Activated naive CD4-positive, alpha-beta T cell treated with anti-CD3 and anti-CD28 coated beads for 36 hours (primary cell): ENCODE measurements at regions of chr12 and their contacts with region 1.

Region 1: DNA sequence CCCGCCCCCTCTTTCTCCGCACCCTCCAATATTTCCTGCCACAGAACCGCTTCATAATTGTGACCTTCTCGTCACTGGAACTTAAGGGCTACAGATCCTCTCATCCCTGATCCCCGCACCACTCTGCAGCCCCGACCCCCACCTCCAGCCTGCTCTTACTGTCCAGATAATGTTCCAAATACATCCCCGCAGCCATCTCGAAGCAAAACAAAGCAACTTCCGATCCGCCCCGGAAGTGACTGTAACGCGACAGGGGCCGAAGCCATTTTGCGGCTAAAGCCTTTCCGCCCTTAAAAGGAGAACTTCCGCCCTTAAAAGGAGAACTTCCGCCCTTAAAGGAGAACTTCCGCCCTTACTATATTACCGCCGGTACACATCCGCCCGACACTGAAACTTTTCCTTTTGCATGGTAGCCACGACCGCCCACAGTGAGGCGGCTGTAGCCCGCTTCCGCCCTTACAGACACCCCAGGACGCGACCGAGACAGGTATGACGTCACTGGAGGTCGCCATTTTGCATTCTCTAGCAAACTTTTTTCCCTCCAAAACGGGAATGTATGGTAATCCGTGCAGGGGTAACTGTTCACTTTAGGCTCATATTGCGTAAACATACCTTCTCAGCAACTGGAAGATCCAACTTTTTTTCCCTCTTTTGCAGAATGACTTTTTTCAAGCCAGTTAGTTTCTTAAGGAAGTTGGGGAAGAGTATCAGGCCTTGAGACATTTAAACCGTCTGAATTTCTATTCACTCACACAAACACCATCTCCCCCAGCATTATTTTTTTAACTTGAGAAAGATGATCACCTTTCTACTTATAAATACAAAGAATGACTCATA is at the start of gene ING4:
- DNase-seq: peak; percentile 99
- H3K4me3 Mint-ChIP-seq: peak within 1 kb of the TSS; percentile 86
- H3K27ac Mint-ChIP-seq: peak within 1 kb of the TSS; percentile 88
- H3K4me1 Mint-ChIP-seq: peaks cover 25% of the 10 kb centered on the region
- H3K27me3 Mint-ChIP-seq: no peaks in the 10 kb centered on the region
- total RNA-seq, gene ING4: 17.3 to 17.8 TPM

Region 2: DNA sequence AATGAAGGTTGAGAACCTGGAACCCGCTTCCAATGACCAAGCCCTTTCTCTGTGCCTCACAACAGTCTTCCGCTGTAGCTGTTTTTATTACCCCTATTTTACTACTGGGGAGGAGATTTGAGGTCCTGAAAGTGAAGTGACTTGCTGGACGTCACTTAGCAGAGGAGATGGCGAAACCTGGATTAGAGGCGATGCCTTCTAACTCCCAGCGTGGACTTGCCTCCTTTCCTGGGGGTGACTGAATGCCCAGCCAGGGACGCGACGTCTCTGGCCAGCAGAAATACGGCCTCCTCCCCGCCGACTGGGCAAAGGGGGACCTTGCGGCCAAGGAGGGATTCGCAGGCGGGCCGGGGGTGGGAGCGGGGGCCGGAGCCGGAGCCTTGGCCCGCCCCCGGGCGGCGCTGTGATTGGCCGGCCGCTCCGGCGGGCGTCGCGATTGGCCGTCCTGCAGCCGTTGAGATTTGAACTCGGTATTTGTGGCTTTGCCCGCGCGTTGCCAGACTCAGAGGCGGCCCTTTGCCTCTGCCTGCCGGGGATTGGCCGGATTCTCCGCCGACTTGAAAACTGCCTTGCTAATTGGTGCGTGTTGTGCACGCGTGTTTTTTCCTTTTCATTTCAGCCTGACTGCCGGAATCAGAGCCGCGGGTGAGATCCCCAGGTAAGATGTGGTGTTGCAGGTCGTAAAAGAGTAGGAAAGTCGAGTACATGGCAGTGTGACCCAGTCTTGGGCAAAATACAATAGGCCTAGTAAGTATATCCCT is 169.4 kb before region 1 on chr12 and contains the start of gene NCAPD2:
- CTCF ChIA-PET with region 1: no interaction called
- intact Hi-C with region 1: loop called (anchors 1 kb)
- DNase-seq: peak; percentile 98
- H3K4me3 Mint-ChIP-seq: peak within 1 kb of the TSS; percentile 98
- H3K27ac Mint-ChIP-seq: peak within 1 kb of the TSS; percentile 99
- H3K4me1 Mint-ChIP-seq: peaks cover 33% of the 10 kb centered on the region
- H3K27me3 Mint-ChIP-seq: no peaks in the 10 kb centered on the region
- total RNA-seq, gene NCAPD2: 252 to 261 TPM

Region 3: DNA sequence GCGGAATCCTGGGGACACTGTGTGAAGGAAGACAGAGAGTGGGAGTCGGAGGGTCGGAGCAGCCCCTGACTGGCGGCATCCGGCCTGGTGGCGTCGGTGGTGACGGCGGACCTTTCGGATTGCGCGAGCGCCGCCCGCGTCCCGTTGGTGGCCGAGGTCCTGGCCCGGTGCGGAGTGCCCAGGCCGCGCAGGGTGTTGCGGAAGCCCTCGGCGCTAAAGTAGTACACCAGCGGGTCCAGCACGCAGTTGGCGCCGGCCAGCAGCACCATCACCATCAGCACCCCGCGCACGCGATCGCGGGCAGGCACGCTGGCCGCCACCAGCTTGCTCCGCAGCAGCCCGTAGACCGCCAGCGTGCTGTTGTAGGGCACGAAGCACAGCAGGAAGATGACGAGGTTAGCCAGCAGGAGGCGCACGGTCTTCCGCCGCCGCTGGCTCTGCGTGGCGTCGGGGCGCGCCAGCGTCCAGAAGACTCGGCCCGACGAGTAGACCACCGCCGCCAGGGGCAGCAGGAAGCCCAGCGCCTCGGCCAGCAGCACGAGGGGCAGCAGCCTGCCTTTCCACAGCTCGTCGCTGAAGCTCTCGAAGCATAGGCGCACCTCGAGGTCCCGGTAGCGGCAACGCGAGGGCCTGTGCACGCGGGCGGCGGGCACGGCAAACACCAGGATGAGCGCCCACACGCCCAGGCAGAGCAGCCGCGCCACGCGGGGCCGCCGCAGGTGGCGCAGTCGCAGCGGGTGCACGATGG is 42.8 kb before region 1 on chr12:
- CTCF ChIA-PET with region 1: interaction called, 20 read pairs
- intact Hi-C with region 1: no loop called
- DNase-seq: peak; percentile 67
- H3K4me3 Mint-ChIP-seq: peak overlapping the region; percentile 30
- H3K27ac Mint-ChIP-seq: no peak overlapping the region
- H3K4me1 Mint-ChIP-seq: peaks cover 8% of the 10 kb centered on the region
- H3K27me3 Mint-ChIP-seq: no peaks in the 10 kb centered on the region

Region 4: DNA sequence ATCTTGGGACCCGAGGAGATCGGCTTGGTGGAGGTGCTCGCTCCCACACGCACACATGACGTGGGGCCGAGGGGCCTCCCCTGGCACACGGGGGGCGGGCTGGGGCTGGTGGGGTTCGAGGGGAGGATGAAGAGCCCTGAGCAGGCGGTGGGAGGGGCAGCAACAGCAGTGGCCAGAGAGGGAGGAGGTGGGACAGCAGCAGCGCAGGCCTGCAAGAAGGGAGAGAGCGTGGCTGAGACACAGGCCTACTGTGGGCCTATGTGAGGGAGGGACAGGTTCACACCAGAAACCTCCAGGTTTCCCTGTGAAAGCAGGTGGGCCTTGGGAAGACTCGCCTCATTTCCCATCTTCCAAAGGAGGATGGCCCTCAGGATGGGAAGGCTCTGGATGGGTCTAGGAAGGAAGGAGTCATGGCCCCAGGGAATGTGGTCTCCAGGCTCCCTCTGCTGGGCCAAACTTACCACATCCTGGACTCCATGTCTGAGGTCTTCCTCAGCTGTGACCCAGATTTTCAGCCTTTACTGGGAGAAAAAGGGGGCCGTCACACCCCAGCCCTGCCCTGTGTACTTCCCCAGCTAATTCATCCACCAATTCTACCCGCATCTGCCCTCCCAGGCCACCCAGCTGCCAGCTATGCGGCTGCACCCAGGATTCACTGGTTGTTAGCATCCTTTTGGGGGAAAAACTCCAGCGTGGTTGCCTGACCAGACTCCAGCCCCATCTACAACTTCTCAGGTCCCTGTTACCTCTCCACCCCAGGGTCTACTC is 34.6 kb after region 1 on chr12:
- CTCF ChIA-PET with region 1: no interaction called
- intact Hi-C with region 1: no loop called
- DNase-seq: peak; percentile 50
- H3K4me3 Mint-ChIP-seq: no peak overlapping the region
- H3K27ac Mint-ChIP-seq: no peak overlapping the region
- H3K4me1 Mint-ChIP-seq: peaks cover 8% of the 10 kb centered on the region
- H3K27me3 Mint-ChIP-seq: peaks cover 27% of the 10 kb centered on the region

Region 5: DNA sequence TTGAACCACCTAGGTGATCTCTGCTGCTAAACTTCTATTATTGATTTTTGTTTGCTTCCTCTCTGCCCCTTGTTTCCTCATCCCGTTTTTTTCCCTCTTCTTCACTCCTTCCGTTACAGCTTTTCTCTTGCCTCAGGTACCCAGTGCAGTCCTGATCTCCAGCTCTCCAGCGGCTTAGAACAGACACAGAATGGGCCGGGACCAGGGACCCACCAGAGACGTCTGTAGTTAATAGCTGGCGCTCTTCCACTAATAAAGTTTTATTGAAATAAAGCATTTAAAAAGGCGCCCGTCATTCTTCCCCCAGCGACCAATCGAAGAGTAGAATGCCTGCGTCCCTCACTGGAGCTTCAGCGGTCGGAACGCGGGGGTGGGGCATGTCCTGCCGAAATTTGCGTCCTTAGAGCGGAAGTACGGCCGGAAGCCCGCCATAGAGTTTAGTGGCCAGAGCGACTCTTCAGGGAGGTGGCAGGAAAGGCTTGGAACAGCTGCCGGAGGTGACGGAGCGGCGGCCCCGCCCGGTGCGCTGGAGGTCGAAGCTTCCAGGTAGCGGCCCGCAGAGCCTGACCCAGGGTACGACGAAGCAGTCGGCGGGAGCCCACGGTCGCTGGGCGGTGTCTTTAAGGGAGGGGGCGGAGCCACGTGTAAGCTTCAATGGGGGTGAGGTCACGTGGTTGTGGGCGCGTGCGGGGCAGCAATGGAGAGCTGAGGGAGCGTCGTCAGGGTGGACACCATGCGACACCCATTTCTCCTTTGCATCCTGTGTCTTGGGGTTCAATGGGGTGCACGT is 60.7 kb after region 1 on chr12 and contains the start of gene COPS7A:
- CTCF ChIA-PET with region 1: no interaction called
- intact Hi-C with region 1: loop called (anchors 1 kb)
- DNase-seq: peak; percentile 98
- H3K4me3 Mint-ChIP-seq: peak within 1 kb of the TSS; percentile 91
- H3K27ac Mint-ChIP-seq: peak within 1 kb of the TSS; percentile 89
- H3K4me1 Mint-ChIP-seq: peaks cover 25% of the 10 kb centered on the region
- H3K27me3 Mint-ChIP-seq: no peaks in the 10 kb centered on the region
- total RNA-seq, gene COPS7A: 43.0 to 47.8 TPM

Region 6: DNA sequence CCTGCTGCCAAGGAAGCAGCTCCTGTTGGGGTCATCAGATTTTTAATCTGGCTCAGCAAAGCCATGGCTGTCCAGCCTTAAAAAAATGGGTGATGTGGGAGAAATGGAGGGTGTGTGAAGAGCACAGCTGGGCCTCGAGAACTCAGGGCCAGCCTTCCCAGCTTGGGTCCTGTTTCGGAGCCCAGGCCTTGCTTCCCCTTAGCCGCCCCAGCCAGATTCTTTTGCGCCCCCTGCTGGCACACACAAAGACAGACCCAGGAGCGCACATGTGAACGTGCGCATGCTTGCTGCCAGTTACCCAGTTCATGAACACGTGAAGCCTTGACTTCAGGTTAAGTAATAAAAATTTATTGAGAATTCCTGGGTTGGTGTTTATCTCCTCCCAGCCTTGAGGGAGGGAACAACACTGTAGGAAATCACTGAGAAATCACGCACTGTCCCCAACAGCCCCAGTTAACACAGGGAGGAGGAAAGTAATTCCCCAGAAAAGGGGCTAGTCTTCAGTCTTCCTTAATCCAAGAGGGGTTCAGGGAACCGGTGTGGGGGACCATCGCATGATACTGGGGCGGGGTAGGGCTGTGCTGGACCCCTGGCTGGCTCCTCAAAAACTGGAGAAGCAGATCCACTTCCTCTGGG is 302.0 kb after region 1 on chr12:
- CTCF ChIA-PET with region 1: no interaction called
- intact Hi-C with region 1: loop called (anchors 1 kb)
- DNase-seq: peak; percentile 95
- H3K4me3 Mint-ChIP-seq: no peak overlapping the region
- H3K27ac Mint-ChIP-seq: peak overlapping the region; percentile 93
- H3K4me1 Mint-ChIP-seq: peaks cover 81% of the 10 kb centered on the region
- H3K27me3 Mint-ChIP-seq: no peaks in the 10 kb centered on the region